Right ventricle myocardium superior (tissue), 1 donor: ENCODE measurements at regions of chr21 and their contacts with region 1.

Region 1: GRCh38 chr21:46253610-46254124 is 25.1 kb upstream of the LSS start:
- DNase-seq: no peak
- ATAC-seq: no peak

Region 2: DNA sequence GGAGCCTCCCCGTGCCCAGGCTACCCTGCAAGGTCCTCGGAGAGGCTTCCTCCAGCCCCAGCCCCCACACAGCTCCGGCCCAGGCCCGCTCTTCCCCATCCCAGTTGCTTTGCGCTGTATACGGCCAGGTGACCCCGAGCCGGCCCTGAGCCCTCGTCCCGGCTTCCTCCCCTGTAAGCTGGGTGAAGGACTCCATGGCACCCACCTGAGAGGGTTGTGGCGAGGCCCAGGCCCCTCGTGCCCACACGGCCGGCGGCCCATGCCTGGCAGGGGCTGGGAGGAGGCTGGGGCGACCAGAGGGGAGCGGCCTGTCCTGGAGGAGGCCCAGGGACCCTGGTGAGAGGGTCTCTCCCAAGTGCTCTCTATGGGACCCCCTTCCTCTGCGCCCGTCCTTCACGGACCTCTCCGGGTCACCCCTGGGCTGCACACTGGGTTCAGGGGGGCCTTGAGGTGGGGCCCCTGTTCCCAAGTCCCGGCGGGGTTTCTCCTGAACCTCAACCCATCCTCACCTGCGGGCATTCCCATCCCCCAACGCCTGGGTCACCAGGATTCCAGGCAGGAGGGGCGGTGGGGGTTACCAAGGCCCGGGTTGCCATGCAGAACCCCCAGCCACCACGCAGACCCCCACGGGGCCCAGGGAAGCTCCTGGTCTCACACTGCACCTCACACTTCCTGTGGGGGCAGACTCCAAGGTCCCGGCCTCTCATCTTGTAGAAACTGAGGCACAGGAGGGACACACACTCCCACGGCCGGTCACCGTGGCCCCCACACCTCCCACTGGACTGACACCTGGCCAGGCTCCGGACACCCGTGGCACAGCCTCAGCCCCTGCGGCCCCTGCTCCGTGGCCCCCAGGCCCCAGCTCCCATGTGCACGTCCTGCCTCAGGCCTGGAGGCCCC is 246.9 kb before region 1 on chr21:
- intact Hi-C with region 1: no loop called
- DNase-seq: no peak
- ATAC-seq: no peak

Region 3: GRCh38 chr21:46144464-46145070 is 109.1 kb before region 1 on chr21:
- intact Hi-C with region 1: loop called (anchors 10 kb)
- DNase-seq: peak; percentile 33
- ATAC-seq: no peak